Common myeloid progenitor, CD34-positive (primary cell): ENCODE measurements at regions of chr18 and their contacts with region 1.

Region 1: DNA sequence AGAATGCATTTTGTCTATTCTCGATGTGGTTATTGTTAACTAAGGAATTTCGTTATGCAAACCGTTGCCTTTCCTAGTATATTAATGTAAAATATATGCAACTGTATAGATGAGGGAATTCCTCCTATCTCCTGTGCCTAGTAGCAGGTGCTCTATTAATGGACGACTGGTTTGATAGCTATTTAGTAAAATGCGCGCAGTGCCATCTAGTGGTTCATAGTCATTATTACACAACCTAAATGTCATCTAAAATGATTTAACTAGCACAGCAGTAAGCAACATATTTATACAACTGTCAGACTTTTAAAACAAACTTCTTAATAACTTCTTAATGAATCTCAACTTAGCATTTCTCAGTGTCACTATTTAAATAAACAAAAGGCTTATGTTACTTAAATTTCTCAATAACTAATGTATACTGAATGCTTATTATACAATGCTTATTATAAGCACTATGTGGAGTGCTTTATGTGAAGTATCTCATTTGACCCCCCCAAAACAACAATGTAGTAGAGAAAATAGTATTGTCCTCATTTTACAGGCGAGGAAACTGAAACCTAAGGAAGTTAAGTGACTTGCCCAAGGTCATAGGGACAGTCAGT is 77.9 kb downstream of the DTNA start:
- DNase-seq: peak; percentile 63 to 79 (median 68)
- H3K4me3 ChIP-seq: no peak overlapping the region
- H3K27ac ChIP-seq: no peak overlapping the region
- H3K4me1 ChIP-seq: no peaks in the 10 kb centered on the region
- H3K27me3 ChIP-seq: no peaks in the 10 kb centered on the region

Region 2: GRCh38 chr18:34122724-34123334 is 665.2 kb before region 1 on chr18:
- CTCF ChIA-PET with region 1: interaction called, 10 read pairs
- POLR2A ChIA-PET with region 1: no interaction called
- DNase-seq: peak; percentile 34 to 64 (median 53)
- H3K4me3 ChIP-seq: no peak overlapping the region
- H3K27ac ChIP-seq: no peak overlapping the region
- H3K4me1 ChIP-seq: no peaks in the 10 kb centered on the region
- H3K27me3 ChIP-seq: no peaks in the 10 kb centered on the region

Region 3: DNA sequence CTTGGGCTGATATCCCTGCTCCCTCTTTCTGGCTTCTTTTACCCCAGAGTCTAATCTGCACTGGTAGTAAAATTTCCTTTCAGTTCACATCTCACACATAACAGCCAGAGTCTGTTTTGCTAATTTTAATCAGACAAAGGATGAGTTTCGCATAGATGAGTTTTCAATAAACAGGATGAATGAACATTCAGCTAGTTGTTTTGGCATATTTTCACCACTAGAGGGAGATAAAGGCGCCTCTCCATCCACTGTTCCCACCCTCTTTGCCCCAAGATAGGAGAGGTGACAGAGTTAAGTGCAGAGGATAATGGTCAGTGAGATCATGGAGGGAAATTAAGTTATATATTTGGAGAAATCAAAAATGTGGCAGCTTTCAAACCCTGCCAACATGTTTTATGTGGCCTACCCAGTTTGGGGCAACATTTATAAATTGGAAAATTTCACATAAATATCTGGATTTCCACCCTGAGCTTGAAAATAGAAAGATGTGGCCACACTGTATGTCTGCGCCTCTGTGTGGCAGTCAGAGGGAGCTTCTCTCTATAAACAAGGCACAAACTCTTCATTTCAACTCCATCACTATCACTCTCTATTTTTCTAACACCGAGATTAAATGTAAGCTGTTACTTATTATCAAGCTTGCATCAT is 126.4 kb before region 1 on chr18:
- CTCF ChIA-PET with region 1: interaction called, 24 read pairs
- POLR2A ChIA-PET with region 1: no interaction called
- DNase-seq: peak; percentile 38 to 59 (median 43)
- H3K4me3 ChIP-seq: no peak overlapping the region
- H3K27ac ChIP-seq: no peak overlapping the region
- H3K4me1 ChIP-seq: peaks cover 0 to 10% (median 3%) of the 10 kb centered on the region in 4 experiments
- H3K27me3 ChIP-seq: no peaks in the 10 kb centered on the region

Region 4: DNA sequence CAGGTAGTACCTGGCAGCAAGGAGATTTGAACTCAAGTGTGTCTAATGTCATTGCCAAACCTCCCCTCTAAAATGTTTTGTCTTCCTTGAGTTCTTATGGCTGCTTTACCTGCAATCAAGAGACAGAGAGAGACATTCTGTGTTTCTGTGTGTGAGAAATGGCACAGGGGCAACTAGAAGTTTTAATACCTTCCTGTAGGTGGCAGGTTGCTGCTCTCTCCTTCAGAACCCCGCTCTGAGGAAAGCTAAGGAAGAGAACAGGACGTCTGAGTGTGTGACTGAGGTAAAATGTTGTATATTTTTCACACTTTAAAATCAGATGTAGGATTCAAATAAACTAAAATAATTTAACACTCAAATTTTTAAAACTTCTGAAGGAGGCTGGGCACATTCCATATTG is 58.8 kb before region 1 on chr18:
- CTCF ChIA-PET with region 1: interaction called, 11 read pairs
- POLR2A ChIA-PET with region 1: no interaction called
- DNase-seq: peak; percentile 17 to 68 (median 62)
- H3K4me3 ChIP-seq: no peak overlapping the region
- H3K27ac ChIP-seq: no peak overlapping the region
- H3K4me1 ChIP-seq: peaks cover 0 to 4% (median 0%) of the 10 kb centered on the region in 4 experiments
- H3K27me3 ChIP-seq: peaks cover 0 to 2% (median 0%) of the 10 kb centered on the region in 5 experiments